ENCODE measurements at regions of chr3 and their contacts with region 1.

Region 1: GRCh38 chr3:158845765-158846350 is 44.0 kb downstream of the MFSD1 start:
- DNase-seq: peak; percentile 64
- H3K27ac ChIP-seq: no peak overlapping the region
- CTCF ChIP-seq: peak; percentile 79

Region 2: GRCh38 chr3:158418035-158418434 is 427.8 kb before region 1 on chr3:
- CTCF ChIA-PET with region 1: no interaction called
- POLR2A ChIA-PET with region 1: no interaction called
- DNase-seq: no peak
- H3K27ac ChIP-seq: no peak overlapping the region
- CTCF ChIP-seq: no peak

Region 3: DNA sequence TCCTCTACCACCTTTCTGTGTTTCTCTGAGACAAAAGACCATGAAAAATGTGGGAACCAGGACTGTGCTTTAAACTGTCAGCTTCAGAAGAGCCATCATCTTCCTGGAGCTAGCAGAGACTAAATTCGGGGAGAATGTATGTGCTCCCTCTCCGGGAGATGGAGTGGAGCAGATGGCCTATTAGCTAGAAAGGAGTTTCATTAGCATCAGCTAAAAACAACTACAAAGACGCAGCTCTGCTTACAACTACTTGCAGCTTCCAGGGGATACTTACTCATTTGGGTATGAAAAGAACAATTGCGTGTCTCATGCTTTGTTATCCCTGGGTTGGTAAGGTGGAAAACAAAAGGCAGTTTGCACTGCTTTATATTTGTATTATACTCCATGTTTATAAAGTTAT is 115.6 kb after region 1 on chr3:
- CTCF ChIA-PET with region 1: no interaction called
- POLR2A ChIA-PET with region 1: no interaction called
- DNase-seq: no peak
- H3K27ac ChIP-seq: no peak overlapping the region
- CTCF ChIP-seq: no peak

Region 4: DNA sequence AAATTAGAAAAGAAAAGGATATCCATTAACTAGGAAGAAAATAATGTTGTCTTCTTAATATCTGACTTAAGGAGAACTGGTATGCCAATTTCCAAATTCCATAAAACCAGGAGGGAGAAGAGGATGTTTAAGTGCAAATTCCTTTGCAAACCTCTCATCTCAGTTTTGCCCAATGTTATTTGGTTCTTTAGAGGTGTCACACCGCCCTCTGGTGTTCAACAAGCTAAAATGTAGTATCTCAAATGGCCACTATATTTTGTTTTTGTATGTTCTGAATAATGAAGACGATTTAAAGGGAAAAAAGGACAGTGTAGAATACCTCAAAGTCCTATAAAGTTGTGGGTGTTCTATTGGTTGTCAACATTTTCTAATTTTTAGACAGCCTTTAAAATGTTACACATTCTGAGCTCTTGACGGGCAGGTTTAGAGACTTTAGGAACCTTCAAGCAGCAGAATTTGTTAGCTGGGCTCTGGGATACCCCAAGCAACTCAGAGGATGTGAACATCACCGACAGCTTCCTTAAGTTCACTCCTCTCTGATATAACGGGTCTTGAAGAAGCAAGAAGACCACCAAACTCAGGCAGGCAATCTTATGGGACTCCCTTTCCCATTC is 414.3 kb after region 1 on chr3:
- CTCF ChIA-PET with region 1: interaction called, 28 read pairs
- POLR2A ChIA-PET with region 1: no interaction called
- DNase-seq: peak; percentile 33
- H3K27ac ChIP-seq: no peak overlapping the region
- CTCF ChIP-seq: peak; percentile 71

Region 5: GRCh38 chr3:159413319-159413718 is 567.5 kb after region 1 on chr3:
- CTCF ChIA-PET with region 1: no interaction called
- POLR2A ChIA-PET with region 1: no interaction called
- DNase-seq: no peak
- H3K27ac ChIP-seq: no peak overlapping the region
- CTCF ChIP-seq: no peak